ENCODE measurements at regions of chr10 and their contacts with region 1.

Region 1: GRCh38 chr10:78972947-78973900 is 95.5 kb upstream of the ZMIZ1 start:
- DNase-seq: peak; percentile 91

Region 2: GRCh38 chr10:78805176-78805575 is 168.0 kb before region 1 on chr10:
- intact Hi-C with region 1: loop called (anchors 5 kb)
- DNase-seq: no peak

Region 3: GRCh38 chr10:78931321-78932053 is 41.7 kb before region 1 on chr10:
- intact Hi-C with region 1: no loop called
- DNase-seq: no peak

Region 4: DNA sequence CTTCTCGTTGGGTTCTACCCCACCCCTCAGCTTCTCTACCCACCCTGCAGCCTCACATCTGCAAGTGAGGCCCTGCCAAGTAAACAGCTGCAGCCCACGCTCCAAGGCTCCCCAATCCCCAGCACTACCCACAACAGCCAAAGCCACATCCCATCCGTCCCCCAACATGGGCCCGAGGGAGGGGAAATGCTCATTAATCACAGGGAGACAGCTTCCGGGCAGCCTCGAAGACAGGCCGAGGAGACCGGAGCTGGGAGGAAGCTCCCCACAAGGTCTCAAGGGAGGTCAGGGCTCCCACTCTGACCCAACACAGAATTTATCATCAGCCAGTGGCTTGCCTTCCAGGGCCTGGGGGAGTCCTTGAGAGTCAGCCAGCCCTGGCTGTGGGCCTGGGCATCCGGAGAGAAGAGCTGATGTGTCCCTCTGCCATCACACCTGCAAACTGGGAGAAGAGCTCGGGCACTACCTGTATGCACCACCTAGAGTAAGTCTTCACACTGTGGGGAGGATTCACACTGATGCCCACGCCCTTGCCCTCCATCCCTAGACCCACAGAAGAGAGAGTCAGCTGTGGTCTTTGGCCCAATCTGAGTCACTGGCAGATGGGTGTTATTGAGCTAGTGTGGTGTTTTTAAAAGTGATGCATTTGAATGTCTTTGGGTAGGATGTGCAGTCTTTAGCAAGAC is 20.0 kb before region 1 on chr10:
- intact Hi-C with region 1: loop called (anchors 2 kb)
- DNase-seq: no peak

Region 5: DNA sequence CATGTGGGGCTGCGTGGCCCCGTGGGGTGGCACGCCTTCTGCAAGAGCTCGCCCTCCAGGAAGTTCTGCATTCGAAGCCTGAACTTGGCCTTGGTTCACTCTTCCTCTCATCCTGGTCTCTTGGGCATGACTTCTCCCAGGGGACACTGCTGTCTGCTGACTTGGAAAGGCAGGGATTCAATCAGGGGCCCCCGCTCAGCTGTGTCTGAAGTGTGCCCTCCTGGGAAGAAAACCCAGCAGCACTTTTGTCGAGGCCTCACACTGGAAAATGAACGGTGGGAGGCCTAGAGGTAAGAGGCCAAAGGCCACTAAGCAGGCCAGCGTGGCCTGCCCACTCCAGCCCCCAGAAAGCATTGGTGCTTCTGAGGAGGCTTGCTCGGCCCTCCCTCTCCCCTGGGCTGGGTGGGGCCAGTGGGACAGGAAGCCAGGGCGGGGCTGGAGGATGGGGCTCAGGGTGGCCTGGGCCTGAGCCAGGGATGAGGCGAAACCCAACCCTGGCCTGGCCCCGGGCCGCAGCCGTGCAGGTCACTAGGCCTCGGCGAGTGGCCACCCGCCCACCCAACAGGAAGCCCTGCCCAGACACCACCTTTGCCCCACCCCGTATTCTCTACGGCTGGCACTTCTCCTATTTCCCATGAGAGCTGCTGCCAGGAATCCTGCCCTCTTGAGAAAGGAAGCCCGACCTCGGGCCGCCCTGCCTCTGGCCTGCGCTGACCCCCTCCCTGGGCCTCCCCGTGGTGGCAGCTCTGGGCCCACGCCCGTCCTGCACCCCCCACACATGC is 176.6 kb after region 1 on chr10:
- intact Hi-C with region 1: loop called (anchors 5 kb)
- DNase-seq: peak; percentile 95